ENCODE measurements at regions of chr17 and their contacts with region 1.

Region 1: GRCh38 chr17:50372758-50373556 is at the starts of genes EME1 and MRPL27:
- DNase-seq: peak; percentile 80 to 81
- ATAC-seq: peak; percentile 96 to 98
- H3K4me3 ChIP-seq: peak within 1 kb of the TSS; percentile 83 to 98 (median 84)
- H3K27ac ChIP-seq: peak within 1 kb of the TSS; percentile 94 to 99 (median 96)
- H3K4me1 ChIP-seq: peaks cover 20 to 33% of the 10 kb centered on the region in 2 donors
- H3K27me3 ChIP-seq: no peaks in the 10 kb centered on the region
- CTCF ChIP-seq: peak in 2 of 5 experiments; percentile 23 to 46
- POLR2A ChIP-seq: peak; percentile 36 to 61
- total RNA-seq, gene EME1: 0.82 to 0.95 TPM in 2 of 4 donors, not detected in the others
- total RNA-seq, gene MRPL27: 110 to 141 (median 134) TPM

Region 2: DNA sequence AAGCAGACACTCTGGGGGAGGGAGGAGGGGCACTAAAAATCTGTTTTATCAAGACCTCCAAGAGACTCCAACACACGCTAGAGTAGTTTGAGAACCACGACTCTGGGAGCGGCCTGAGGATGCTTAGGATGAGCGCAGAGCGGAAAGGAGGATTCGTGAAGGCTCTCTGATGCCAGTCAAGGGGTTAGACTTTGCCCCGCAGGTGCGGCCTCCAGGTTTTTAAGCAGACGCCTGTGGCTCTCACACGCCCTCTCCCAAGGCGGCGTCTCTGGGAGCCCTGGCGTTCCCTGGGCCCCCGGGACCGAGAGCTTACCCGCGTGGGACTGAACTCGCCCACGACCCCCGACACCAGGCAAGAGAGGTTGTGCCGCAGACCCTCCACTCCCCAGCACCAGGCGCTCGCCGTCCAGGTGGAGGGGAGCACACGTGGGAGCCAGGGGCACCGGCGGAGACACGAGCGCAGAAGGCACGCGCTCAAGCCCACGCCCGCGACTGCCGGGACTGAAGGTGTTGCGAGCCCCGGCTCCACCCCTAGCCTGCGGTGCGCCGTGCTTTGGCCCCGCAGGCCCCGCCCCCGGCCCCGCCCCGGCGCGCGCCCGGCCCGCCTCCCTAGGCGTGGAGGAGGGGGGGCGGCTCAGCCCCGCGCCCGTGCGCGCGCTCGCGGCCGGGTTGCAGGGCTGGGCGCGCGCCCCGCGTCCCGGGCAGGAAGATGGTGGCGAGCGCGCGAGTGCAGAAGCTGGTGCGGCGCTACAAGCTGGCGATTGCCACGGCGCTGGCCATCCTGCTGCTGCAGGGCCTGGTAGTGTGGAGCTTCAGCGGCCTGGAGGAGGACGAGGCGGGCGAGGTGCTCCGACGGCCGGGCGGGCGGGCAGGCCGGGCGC is 27.3 kb before region 1 on chr17 and contains the start of gene XYLT2:
- in situ Hi-C with region 1: no loop called
- intact Hi-C with region 1: loop called (anchors 2 kb)
- DNase-seq: peak; percentile 72 to 82
- ATAC-seq: peak; percentile 77 to 90
- H3K4me3 ChIP-seq: peak within 1 kb of the TSS; percentile 76 to 89 (median 84)
- H3K27ac ChIP-seq: peak within 1 kb of the TSS; percentile 69 to 76 (median 73)
- H3K4me1 ChIP-seq: peaks cover 8 to 19% of the 10 kb centered on the region in 2 donors
- H3K27me3 ChIP-seq: no peaks in the 10 kb centered on the region
- CTCF ChIP-seq: no peak
- POLR2A ChIP-seq: peak; percentile 50 to 63
- total RNA-seq, gene XYLT2: 7.9 to 12.6 (median 9.8) TPM

Region 3: GRCh38 chr17:50397111-50397918 is 24.4 kb after region 1 on chr17 and contains the start of gene LRRC59:
- in situ Hi-C with region 1: no loop called
- intact Hi-C with region 1: loop called (anchors 1 kb)
- DNase-seq: peak; percentile 64 to 79
- ATAC-seq: peak; percentile 93 to 94
- H3K4me3 ChIP-seq: peak within 1 kb of the TSS; percentile 80 to 96 (median 92)
- H3K27ac ChIP-seq: peak within 1 kb of the TSS; percentile 80 to 85 (median 84)
- H3K4me1 ChIP-seq: peaks cover 15 to 17% of the 10 kb centered on the region in 2 donors
- H3K27me3 ChIP-seq: no peaks in the 10 kb centered on the region
- CTCF ChIP-seq: peak; percentile 87 to 99 (median 96)
- POLR2A ChIP-seq: peak; percentile 59 to 82
- total RNA-seq, gene LRRC59: 25.4 to 73.2 (median 55.8) TPM

Region 4: DNA sequence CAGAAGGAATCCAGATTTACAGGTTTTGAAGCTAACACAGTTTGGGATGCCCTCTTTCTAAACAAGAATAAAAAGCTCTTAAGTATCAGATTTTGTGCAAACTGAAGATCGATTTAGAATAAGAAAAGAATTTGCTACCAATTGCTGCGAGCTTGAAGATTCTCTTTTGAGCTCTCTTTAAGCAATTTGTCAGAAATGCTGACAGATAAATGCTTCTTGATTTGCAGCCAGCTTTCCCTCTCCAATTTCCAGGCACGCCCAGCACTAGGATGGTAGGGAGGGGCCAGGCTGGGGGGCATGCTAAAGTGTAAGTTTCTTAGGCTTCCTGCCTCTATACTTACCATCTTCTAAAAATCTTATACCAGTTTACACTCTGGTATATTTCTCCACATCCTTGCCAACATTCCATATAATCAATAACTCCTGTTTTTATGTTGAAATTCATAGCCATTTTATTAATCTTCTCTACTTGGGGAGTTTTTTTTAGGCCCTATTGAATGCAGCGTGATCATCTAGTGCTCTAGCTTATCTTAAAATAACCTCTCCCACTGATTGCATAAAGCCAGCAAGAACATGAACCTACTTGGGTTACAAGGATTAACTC is 70.5 kb after region 1 on chr17:
- in situ Hi-C with region 1: no loop called
- intact Hi-C with region 1: no loop called
- DNase-seq: peak; percentile 41 to 48
- ATAC-seq: peak; percentile 94 to 96
- H3K4me3 ChIP-seq: peak overlapping the region in 2 of 4 donors; percentile 7 to 26
- H3K27ac ChIP-seq: peak overlapping the region; percentile 76 to 87 (median 85)
- H3K4me1 ChIP-seq: peaks cover 59 to 60% of the 10 kb centered on the region in 2 donors
- H3K27me3 ChIP-seq: no peaks in the 10 kb centered on the region
- CTCF ChIP-seq: no peak
- POLR2A ChIP-seq: no peak

Measured in gastrocnemius medialis (tissue), 4 donors.